OCI-LY7 (cell line): ENCODE measurements at regions of chr1 and their contacts with region 1.

Region 1: GRCh38 chr1:175225805-175226129 is 33.2 kb upstream of the KIAA0040 start:
- DNase-seq: no peak
- H3K4me3 ChIP-seq: peak overlapping the region; percentile 59
- H3K27ac ChIP-seq: peak overlapping the region; percentile 95
- H3K4me1 ChIP-seq: peaks cover 96% of the 10 kb centered on the region
- CTCF ChIP-seq: peak; percentile 79

Region 2: DNA sequence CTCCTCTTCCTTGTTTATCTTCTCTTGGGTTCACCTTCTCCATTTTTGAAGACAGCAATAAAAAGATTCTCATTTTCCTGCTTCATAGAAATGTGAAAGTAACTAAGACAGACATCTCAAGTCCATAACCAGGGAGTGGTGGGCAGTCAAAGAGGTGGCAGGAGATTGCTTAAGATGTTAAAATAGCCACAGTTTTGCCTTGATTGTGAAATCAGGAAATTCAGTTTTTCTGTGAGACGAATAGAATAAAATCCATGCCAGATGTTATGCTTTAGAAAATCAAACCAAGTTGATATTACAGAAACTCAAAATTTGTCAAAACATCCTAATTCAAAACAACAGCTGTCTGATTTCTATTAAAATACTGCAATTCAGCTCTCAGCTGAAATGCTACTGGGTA is 100.9 kb before region 1 on chr1:
- CTCF ChIA-PET with region 1: no interaction called
- POLR2A ChIA-PET with region 1: no interaction called
- intact Hi-C with region 1: no loop called
- DNase-seq: no peak
- H3K4me3 ChIP-seq: no peak overlapping the region
- H3K27ac ChIP-seq: no peak overlapping the region
- H3K4me1 ChIP-seq: peaks cover 14% of the 10 kb centered on the region
- CTCF ChIP-seq: no peak

Region 3: DNA sequence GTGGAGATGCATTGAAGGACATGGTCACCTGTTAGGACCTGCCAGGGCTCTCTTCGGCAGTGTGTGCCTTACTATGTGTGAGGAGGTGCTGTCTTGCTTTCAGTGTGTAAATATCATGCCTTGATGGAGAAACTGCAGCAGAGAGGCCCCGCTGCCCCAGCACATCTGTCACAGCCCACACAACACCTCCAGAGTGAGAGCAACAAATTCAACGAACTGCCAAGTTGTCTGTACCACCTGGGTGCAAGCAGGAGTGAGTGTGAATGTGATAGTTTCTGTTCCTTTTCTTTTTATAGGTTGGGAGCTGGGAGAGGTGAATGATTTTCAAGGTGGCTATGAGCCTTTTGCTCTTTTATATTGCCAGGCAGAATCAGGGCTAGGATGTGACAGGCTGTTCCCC is 81.4 kb after region 1 on chr1:
- CTCF ChIA-PET with region 1: no interaction called
- POLR2A ChIA-PET with region 1: interaction called, 4 read pairs
- intact Hi-C with region 1: loop called (anchors 2 kb)
- DNase-seq: peak; percentile 89
- H3K4me3 ChIP-seq: peak overlapping the region; percentile 30
- H3K27ac ChIP-seq: peak overlapping the region; percentile 85
- H3K4me1 ChIP-seq: peaks cover 56% of the 10 kb centered on the region
- CTCF ChIP-seq: no peak